ENCODE measurements at regions of chr5 and their contacts with region 1.

Region 1: DNA sequence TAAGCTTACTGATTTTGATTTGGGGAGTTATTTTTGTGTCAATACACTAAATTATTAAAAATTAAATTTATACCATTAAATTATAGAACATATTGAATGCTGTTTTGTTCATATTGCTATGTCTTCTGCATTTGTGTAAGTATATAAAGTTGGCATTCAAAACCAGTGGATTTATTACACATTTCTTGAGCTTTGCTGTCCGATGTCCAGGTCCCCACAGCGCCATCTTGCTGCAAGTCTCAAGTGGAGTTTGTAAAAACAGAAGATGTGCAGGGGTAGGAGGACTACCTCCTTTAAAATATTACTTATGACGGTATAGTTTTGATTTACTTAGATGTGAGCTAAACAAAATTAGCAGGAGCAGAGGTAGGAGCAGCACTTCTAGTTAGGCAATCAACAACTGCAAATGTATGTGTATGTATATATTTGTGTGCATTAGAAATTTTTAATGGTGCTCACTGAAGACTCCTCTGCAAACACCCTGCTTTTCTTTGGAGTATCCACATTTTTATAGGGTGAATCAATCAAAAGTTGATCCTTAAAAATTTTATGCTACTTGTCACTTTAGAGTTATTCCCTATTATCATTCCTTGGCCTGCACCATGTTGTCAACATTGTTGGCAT is 37.4 kb downstream of the CPEB4 start:
- DNase-seq: peak; percentile 57
- H3K4me3 Mint-ChIP-seq: no peak overlapping the region
- H3K27ac Mint-ChIP-seq: no peak overlapping the region
- H3K4me1 Mint-ChIP-seq: peaks cover 15% of the 10 kb centered on the region
- H3K27me3 Mint-ChIP-seq: no peaks in the 10 kb centered on the region

Region 2: DNA sequence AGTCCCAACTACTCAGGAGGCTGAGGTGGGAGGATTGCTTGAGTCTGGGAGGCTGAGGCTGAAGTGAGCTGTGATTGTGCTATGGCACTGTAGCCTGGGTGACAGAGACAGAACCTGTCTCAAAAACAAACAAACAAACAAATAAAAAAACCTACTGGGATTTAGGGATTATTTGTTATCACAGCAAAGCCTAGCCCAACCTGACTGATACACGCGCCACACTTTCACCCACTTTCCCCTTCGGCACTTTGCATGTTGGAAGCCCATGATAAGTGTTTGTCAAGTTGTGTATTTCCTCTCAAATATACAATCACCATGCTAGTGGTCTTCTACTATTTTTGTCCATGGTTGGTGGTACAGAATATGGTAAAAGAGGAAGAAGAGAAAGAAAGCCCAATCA is 546.8 kb before region 1 on chr5:
- CTCF ChIA-PET with region 1: no interaction called
- POLR2A ChIA-PET with region 1: no interaction called
- intact Hi-C with region 1: no loop called
- DNase-seq: no peak
- H3K4me3 Mint-ChIP-seq: no peak overlapping the region
- H3K27ac Mint-ChIP-seq: no peak overlapping the region
- H3K4me1 Mint-ChIP-seq: no peaks in the 10 kb centered on the region
- H3K27me3 Mint-ChIP-seq: peaks cover 9% of the 10 kb centered on the region

Region 3: DNA sequence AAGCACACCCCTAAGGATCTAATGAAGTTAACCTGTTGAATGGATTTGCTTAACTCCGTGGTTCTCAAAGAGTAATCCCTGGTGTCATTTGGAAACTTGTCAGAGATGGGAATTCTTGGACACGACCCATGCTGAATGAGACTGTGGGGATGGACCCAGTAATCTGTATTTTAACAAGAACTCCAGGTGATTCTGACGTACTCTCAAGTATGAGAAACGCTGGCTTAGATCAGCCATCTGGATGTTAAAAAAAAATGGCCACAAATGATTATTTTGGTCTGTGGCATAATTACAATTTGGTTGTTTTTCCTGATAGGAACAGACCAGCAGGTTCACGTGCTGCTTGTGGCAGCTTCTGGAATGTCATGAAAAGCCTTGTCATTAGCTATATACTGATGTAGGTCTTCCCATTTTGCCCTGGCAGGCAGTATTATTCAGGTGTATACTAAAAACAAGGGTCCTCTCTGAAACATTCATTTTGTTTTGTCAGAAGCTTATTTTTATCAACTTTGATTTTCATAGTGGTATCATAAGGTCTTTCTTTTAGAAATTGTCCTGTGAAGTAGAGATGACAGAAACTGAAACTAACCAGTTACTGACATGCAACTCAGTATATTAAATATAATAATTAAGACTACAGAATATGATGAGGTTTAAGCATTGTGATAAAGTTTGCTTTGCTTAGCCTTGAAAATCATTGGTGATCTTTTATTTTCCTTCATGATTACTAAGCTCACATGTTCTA is 22.0 kb before region 1 on chr5:
- CTCF ChIA-PET with region 1: interaction called, 10 read pairs
- POLR2A ChIA-PET with region 1: no interaction called
- intact Hi-C with region 1: no loop called
- DNase-seq: no peak
- H3K4me3 Mint-ChIP-seq: no peak overlapping the region
- H3K27ac Mint-ChIP-seq: no peak overlapping the region
- H3K4me1 Mint-ChIP-seq: peaks cover 25% of the 10 kb centered on the region
- H3K27me3 Mint-ChIP-seq: no peaks in the 10 kb centered on the region

Region 4: GRCh38 chr5:173972925-173973615 is 47.5 kb after region 1 on chr5:
- CTCF ChIA-PET with region 1: interaction called, 14 read pairs
- POLR2A ChIA-PET with region 1: no interaction called
- intact Hi-C with region 1: no loop called
- DNase-seq: peak; percentile 85
- H3K4me3 Mint-ChIP-seq: peak overlapping the region; percentile 68
- H3K27ac Mint-ChIP-seq: no peak overlapping the region
- H3K4me1 Mint-ChIP-seq: peaks cover 9% of the 10 kb centered on the region
- H3K27me3 Mint-ChIP-seq: peaks cover 4% of the 10 kb centered on the region

Region 5: DNA sequence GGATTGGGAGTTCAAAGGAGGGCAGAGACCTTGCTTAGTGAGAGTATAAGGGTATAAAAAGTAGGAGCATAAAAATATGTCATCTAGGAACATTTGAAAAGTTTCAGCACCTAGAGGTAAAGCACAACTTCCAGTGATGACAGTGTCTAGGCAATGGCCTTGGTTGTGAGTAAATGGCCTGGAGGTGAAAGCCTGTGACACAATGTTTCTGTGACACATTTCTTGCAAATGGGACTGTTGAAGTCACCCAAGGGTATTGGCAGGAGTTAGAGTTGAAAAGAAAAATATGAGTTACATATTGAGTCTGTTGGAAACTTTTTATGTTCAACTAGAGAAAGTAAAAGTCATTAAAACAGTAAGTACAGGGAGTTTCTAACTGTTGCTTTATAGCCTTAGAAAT is 78.2 kb after region 1 on chr5:
- CTCF ChIA-PET with region 1: no interaction called
- POLR2A ChIA-PET with region 1: no interaction called
- intact Hi-C with region 1: no loop called
- DNase-seq: no peak
- H3K4me3 Mint-ChIP-seq: no peak overlapping the region
- H3K27ac Mint-ChIP-seq: no peak overlapping the region
- H3K4me1 Mint-ChIP-seq: no peaks in the 10 kb centered on the region
- H3K27me3 Mint-ChIP-seq: peaks cover 8% of the 10 kb centered on the region

Measured in activated CD4-positive, alpha-beta memory T cell treated with anti-CD3 and anti-CD28 coated beads for 36 hours (primary cell).